Activated naive CD4-positive, alpha-beta T cell treated with anti-CD3 and anti-CD28 coated beads, Interleukin-2, amount 10 ng/mL, durations not matched to agents 7 days and 5 days (primary cell): ENCODE measurements at regions of chr4 and their contacts with region 1.

Region 1: GRCh38 chr4:173013232-173013930 is 155.2 kb upstream of the GALNT7 start:
- DNase-seq: peak; percentile 64
- H3K4me3 Mint-ChIP-seq: no peak overlapping the region
- H3K27ac Mint-ChIP-seq: no peak overlapping the region
- H3K4me1 Mint-ChIP-seq: no peaks in the 10 kb centered on the region
- H3K27me3 Mint-ChIP-seq: no peaks in the 10 kb centered on the region

Region 2: DNA sequence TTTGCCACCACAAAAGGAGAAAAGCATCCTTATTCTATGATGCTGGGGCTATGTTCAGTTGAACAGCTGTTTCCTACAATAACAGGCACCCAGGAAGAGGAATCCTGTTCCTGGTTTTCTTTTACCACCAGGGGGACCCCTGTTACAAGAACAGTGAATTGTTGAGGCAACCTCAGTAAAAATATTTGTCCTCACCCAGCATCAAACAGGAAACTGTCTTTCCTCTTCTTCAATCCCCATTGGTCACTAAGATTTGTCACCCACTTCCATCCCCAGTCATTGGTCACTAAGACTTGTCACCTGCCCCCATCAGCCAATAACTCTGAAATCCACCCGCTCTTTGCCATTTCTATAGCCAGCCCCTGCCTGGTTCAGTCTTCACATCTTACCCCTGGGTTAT is 11.8 kb after region 1 on chr4:
- CTCF ChIA-PET with region 1: interaction called, 13 read pairs
- DNase-seq: peak; percentile 28
- H3K4me3 Mint-ChIP-seq: no peak overlapping the region
- H3K27ac Mint-ChIP-seq: no peak overlapping the region
- H3K4me1 Mint-ChIP-seq: no peaks in the 10 kb centered on the region
- H3K27me3 Mint-ChIP-seq: peaks cover 7% of the 10 kb centered on the region

Region 3: DNA sequence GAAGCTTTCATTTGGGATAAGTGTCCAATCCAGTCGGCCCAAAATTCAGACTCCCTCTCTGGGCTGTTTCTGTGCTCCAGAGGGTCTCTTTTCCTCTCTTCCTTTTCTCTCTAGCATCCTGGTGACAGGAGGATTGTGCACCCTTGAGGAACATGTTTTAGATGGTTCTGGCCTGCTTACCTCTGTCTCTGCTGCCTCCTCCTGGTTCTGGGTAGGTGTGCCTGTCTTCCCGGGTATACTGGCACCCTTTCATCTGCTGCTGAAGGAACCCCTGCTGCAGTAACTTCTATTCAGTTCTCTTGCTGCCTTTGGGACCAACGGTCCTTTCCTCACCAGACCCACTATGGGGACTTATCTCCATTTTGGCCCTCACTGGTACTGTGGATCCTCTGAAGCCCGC is 267.6 kb after region 1 on chr4:
- CTCF ChIA-PET with region 1: interaction called, 12 read pairs
- DNase-seq: no peak
- H3K4me3 Mint-ChIP-seq: no peak overlapping the region
- H3K27ac Mint-ChIP-seq: no peak overlapping the region
- H3K4me1 Mint-ChIP-seq: no peaks in the 10 kb centered on the region
- H3K27me3 Mint-ChIP-seq: no peaks in the 10 kb centered on the region

Region 4: DNA sequence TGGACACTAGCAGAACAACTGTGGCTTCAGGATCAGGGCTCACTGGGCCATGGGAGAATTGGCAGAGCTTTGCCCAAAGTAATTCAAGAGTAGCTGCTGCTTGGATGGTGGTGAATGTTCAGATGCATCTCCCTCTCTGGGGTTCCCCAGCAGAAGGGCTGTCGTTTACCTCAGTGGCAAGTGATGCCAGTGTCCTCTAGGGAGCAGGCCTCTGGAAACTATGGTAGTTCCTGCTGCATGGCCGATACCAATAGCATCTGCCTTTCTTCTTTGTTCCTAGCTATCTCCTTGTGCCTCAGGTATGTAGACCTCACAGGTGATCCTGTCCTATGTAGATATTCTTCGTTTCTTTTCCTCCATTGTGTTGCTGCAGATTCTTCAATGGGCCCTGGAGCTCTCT is 294.4 kb after region 1 on chr4:
- CTCF ChIA-PET with region 1: interaction called, 10 read pairs
- DNase-seq: no peak
- H3K4me3 Mint-ChIP-seq: no peak overlapping the region
- H3K27ac Mint-ChIP-seq: no peak overlapping the region
- H3K4me1 Mint-ChIP-seq: no peaks in the 10 kb centered on the region
- H3K27me3 Mint-ChIP-seq: no peaks in the 10 kb centered on the region

Region 5: DNA sequence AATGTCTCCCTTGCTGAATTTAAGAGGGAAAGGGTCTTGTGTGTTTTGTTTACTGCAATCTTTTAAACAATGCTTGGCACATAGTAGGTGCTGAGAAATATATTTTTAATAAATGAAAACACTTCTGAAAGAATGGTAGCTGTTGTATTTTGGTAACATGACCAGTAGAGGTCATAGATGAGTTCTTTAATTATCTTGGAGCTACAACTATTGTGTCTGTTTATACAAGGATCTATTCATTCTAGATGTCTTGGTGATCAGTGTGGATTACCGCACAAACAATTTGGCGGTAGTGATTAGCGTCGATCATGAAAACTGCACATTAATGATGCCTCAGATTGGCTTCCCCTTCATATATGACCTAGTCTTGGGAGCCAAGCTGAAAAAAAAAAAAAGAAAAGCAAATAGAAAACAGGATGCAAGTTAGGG is 407.0 kb after region 1 on chr4:
- CTCF ChIA-PET with region 1: interaction called, 11 read pairs
- DNase-seq: no peak
- H3K4me3 Mint-ChIP-seq: no peak overlapping the region
- H3K27ac Mint-ChIP-seq: no peak overlapping the region
- H3K4me1 Mint-ChIP-seq: peaks cover 16% of the 10 kb centered on the region
- H3K27me3 Mint-ChIP-seq: peaks cover 13% of the 10 kb centered on the region